Heart right ventricle (tissue), 16 donors: ENCODE measurements at regions of chr7 and their contacts with region 1.

Region 1: GRCh38 chr7:100215895-100216294 is 3.9 kb upstream of the PVRIG start:
- DNase-seq: peak; percentile 40 to 43
- ATAC-seq: peak; percentile 32 to 81 (median 64)
- H3K4me3 ChIP-seq: no peak overlapping the region
- H3K27ac ChIP-seq: peak overlapping the region in 1 of 10 donors; percentile 18
- H3K4me1 ChIP-seq: peaks cover 0 to 10% (median 6%) of the 10 kb centered on the region in 9 donors
- H3K27me3 ChIP-seq: no peaks in the 10 kb centered on the region
- CTCF ChIP-seq: no peak

Region 2: DNA sequence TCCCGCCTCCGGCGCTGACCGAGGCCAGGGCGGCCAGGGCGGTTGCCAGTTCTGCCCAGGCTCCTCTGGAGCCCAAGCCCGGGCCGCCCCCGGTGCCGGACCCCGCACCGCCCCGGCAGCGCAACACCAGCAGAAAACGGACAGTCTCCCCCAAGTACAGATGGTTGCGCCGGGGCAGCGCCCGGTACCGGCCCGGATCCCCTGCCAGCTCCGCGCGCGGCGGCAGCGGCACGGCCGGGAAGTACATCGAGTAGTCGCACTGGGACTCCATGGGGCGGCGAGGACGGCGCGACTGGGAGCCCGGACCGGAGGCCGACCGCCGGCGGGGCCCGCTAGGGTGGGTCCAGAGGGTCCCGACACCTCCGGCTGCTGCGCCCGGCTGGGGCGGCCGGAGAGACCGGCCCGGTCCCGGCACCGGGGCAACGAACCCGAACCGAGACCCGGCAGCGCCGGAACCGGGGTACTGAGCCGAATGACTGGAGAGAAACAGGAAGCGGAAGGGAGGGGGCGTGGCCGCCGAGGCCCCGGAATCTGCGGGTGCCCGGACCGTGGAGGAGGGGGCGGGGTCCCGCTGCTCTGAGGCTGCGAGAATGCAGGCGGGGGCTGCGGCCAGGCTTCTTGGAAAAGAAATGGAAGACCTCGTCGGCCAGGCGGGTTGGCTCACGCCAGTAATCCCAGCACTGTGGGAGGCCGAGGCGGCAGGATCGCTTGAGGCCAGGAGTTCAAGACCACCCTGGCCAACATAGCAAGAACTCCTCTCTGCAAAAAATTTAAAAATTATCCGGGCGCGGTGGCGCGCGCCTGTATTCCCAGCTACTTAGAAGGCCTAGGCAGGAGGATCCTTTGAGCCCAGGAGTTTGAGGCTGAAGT is 57.4 kb before region 1 on chr7 and contains the start of gene TRAPPC14:
- intact Hi-C with region 1: loop called in 1 of 10 experiments (anchors 10 kb)
- DNase-seq: peak; percentile 94
- ATAC-seq: peak; percentile 85 to 94 (median 92)
- H3K4me3 ChIP-seq: peak within 1 kb of the TSS; percentile 75 to 99 (median 89)
- H3K27ac ChIP-seq: peak within 1 kb of the TSS; percentile 30 to 97 (median 88)
- H3K4me1 ChIP-seq: peaks cover 7 to 48% (median 20%) of the 10 kb centered on the region in 9 donors
- H3K27me3 ChIP-seq: no peaks in the 10 kb centered on the region
- CTCF ChIP-seq: no peak
- total RNA-seq, gene TRAPPC14: 3.9 to 10.8 (median 7.6) TPM

Region 3: GRCh38 chr7:100257017-100257416 is 41.1 kb after region 1 on chr7:
- intact Hi-C with region 1: no loop called
- DNase-seq: no peak
- ATAC-seq: peak in 1 of 8 donors; percentile 70
- H3K4me3 ChIP-seq: no peak overlapping the region
- H3K27ac ChIP-seq: no peak overlapping the region
- H3K4me1 ChIP-seq: no peaks in the 10 kb centered on the region
- H3K27me3 ChIP-seq: no peaks in the 10 kb centered on the region
- CTCF ChIP-seq: no peak